GM13976 (cell line): ENCODE measurements at regions of chr7 and their contacts with region 1.

Region 1: DNA sequence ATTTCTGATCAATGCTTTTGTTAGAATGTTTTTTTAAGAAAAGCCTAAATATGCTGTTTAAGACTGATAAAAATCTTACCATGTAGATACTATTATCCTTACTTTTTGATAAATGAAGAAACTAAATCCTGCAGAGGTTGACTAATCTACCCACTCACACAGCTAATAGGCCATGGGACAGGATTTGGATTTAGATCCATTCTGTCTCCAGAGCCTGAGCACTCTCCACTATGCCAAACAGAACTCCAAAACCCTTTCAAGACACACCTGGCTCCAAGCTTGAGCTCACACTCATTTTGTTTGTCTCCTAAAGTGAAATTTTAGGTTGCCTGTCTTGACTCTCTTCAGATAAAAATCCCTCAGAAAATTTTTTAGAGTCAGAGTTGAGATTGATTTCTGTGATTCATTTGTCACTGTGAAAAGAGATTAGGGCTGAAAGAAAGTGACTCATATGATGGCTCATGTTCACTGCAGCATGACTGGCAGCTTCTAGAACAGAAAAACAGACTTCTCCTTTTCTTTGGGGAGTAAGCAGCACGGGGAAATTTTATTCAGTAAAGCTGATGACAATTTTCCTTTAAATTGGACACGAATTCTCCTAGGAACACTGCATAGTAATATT is 132.3 kb upstream of the POT1 start:
- DNase-seq: peak; percentile 22
- CTCF ChIP-seq: no peak

Region 2: GRCh38 chr7:125154930-125155329 is 93.0 kb after region 1 on chr7:
- in situ Hi-C with region 1: no loop called
- DNase-seq: no peak
- CTCF ChIP-seq: no peak

Region 3: DNA sequence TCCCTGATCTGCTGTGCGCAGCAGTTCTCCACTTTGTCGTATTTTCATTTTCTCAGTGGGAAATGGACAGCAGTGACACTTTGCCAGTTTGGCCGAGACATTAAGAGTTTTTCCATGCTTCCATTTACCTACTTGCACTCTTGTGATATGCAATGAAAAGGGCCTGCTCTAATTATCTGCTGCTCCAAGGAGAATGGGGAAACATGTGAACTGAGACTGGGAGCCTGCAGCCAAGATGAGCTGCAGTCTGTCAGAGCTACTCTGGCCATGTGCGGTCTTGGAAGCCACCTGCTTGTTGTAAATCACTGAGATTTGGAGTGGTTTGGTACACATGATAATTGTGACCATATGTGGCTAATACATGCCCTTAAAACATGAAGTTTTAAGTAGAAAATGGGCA is 454.3 kb after region 1 on chr7:
- in situ Hi-C with region 1: no loop called
- DNase-seq: no peak
- CTCF ChIP-seq: no peak

Region 4: DNA sequence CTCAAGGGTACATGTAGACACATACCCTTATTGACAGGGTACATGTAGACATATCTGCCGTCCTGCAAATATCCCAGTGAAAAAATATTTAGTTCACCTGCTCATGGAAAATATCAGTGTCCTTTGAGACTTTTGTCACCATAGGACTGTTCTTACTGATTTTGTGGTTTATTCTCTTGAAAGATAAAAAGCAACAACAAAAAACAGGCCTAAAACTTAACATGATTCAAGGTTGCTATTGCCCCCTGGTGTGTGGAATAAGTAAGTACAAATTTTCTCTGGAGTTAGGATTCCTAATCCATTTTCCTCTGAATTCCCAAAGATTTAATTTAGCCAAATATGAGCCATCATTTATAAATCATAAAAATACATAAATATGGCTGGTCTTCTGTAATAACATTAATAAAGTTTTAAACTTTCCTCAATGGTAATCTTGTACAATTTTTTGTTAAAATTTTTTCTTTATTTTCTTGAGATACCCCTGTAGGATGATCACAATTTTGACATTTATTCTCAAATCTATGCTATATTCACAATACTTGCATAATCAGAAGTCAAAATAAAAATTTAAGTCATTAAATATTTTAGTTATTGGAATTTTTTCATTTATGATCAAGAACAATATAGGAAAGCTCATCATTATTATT is 609.2 kb after region 1 on chr7:
- in situ Hi-C with region 1: loop called (anchors 25 kb)
- DNase-seq: no peak
- CTCF ChIP-seq: peak; percentile 31